PC-3 (cell line): ENCODE measurements at regions of chr2 and their contacts with region 1.

Region 1: GRCh38 chr2:113248997-113249770 is 29.5 kb downstream of the PAX8 start:
- DNase-seq: peak; percentile 81
- ATAC-seq: peak; percentile 86
- H3K4me3 ChIP-seq: no peak overlapping the region
- H3K27ac ChIP-seq: no peak overlapping the region
- H3K4me1 ChIP-seq: peaks cover 19% of the 10 kb centered on the region
- H3K27me3 ChIP-seq: no peaks in the 10 kb centered on the region
- CTCF ChIP-seq: peak; percentile 95

Region 2: DNA sequence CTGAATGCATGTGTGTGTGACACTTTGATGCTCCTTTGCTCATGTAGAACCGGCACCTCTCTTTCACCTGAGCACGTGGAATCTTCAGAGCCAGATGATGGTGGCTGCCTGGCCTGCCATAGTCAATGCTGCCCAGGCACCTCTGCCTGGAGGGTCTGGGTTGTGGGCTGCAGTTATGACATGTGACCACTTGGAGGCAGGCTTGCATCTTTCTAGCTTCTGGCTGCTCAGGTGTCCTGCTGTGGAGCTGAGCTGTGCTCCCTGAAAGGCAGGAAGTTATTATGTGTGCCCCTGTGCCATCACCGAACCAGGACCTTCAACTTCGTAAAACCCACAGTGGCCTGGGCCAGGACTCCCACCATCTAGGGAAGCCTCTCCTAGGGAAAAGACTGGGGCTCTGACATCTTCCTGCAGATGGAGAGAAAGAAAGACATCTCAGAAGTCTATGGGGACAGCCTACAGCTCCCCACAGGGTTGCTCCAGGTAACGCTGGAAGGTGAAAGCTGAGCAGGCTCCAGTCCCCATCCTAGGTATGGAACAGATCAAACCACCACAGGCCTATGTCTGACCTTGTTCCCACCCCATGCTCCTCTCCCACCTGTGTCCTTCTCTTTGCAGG is 45.2 kb before region 1 on chr2:
- CTCF ChIA-PET with region 1: interaction called, 4 read pairs
- POLR2A ChIA-PET with region 1: interaction called, 19 read pairs
- intact Hi-C with region 1: no loop called
- DNase-seq: peak; percentile 89
- ATAC-seq: peak; percentile 67
- H3K4me3 ChIP-seq: no peak overlapping the region
- H3K27ac ChIP-seq: 0 out of 2 replicates have a peak overlapping the region, but pooled peaks have one; percentile 5
- H3K4me1 ChIP-seq: peaks cover 18% of the 10 kb centered on the region
- H3K27me3 ChIP-seq: no peaks in the 10 kb centered on the region
- CTCF ChIP-seq: peak; percentile 92

Region 3: GRCh38 chr2:113260991-113261390 is 11.8 kb after region 1 on chr2:
- CTCF ChIA-PET with region 1: no interaction called
- POLR2A ChIA-PET with region 1: no interaction called
- intact Hi-C with region 1: no loop called
- DNase-seq: no peak
- ATAC-seq: no peak
- H3K4me3 ChIP-seq: no peak overlapping the region
- H3K27ac ChIP-seq: no peak overlapping the region
- H3K4me1 ChIP-seq: no peaks in the 10 kb centered on the region
- H3K27me3 ChIP-seq: no peaks in the 10 kb centered on the region
- CTCF ChIP-seq: no peak

Region 4: DNA sequence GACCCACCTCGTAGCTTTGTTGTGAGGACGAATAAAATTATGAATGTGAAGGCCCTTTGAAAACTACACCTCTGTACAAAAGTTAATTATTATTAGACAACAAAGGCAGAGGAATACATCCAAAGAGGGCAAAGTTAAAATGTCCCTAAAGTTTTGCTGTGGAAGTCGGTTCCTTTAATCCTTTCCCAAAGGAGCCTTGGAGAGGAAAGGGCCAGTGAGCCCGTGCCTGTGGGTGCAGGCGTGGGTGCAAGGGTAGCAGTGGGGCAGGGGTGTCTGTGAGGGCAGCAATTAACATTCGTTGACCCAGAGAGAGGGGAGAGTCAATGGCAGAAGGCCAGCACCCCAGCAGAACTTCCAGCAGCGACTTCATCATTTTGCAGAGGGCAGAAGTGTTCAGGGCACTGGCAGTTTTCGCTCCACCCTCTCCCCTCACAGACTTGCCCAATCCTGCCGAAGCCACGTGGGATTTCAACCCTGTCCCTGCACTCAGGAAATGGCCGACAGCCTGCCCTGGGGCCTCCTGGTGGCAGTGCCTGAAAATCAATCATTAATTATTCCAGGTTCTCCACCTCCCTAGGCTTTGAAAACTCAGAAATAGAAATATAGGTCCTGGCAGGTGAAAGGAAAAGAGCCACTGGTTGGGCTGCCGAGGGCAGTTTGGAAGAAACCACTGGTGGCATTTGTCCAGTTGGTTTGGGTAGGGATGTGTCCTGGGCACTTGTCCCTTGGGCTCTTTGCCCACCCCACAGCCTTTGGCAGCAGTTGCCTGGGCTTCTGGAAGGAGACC is 33.8 kb after region 1 on chr2:
- CTCF ChIA-PET with region 1: interaction called, 3 read pairs
- POLR2A ChIA-PET with region 1: no interaction called
- intact Hi-C with region 1: loop called (anchors 5 kb)
- DNase-seq: peak; percentile 24
- ATAC-seq: peak; percentile 3; the same call in 1 of the 2 replicates
- H3K4me3 ChIP-seq: no peak overlapping the region
- H3K27ac ChIP-seq: peak overlapping the region; percentile 85
- H3K4me1 ChIP-seq: peaks cover 38% of the 10 kb centered on the region
- H3K27me3 ChIP-seq: no peaks in the 10 kb centered on the region
- CTCF ChIP-seq: peak; percentile 42; the same call in 1 of the 2 replicates

Region 5: DNA sequence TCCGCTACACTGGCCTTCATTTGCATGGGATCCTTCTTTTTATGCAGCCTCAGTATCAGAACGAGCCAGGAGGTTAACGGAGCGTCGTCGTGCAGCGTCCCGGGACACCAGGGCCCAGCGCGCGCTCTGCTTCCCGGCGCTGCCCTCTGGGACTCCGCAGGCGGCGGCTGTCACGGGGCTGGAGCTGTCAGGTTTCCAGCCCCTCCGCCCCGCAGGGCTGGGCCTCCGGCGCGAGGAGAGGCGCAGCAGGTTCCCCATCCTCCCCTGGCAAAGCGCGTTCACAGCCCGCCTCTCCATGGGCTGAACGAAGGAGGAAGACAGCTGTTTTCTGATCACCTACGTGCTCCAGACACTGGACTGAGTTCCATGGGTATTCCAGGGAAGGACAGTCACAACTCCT is 42.0 kb after region 1 on chr2:
- CTCF ChIA-PET with region 1: no interaction called
- POLR2A ChIA-PET with region 1: no interaction called
- intact Hi-C with region 1: loop called (anchors 2 kb)
- DNase-seq: no peak
- ATAC-seq: no peak
- H3K4me3 ChIP-seq: no peak overlapping the region
- H3K27ac ChIP-seq: no peak overlapping the region
- H3K4me1 ChIP-seq: peaks cover 13% of the 10 kb centered on the region
- H3K27me3 ChIP-seq: no peaks in the 10 kb centered on the region
- CTCF ChIP-seq: no peak

Region 6: GRCh38 chr2:113370478-113371091 is 121.4 kb after region 1 on chr2:
- CTCF ChIA-PET with region 1: no interaction called
- POLR2A ChIA-PET with region 1: no interaction called
- intact Hi-C with region 1: loop called (anchors 1 kb)
- DNase-seq: peak; percentile 92
- ATAC-seq: peak; percentile 99
- H3K4me3 ChIP-seq: no peak overlapping the region
- H3K27ac ChIP-seq: no peak overlapping the region
- H3K4me1 ChIP-seq: peaks cover 20% of the 10 kb centered on the region
- H3K27me3 ChIP-seq: no peaks in the 10 kb centered on the region
- CTCF ChIP-seq: peak; percentile 75